Activated CD8-positive, alpha-beta T cell treated with anti-CD3 and anti-CD28 coated beads for 36 hours (primary cell): ENCODE measurements at regions of chr12 and their contacts with region 1.

Region 1: GRCh38 chr12:94262228-94263010 is 114.0 kb downstream of the PLXNC1 start:
- DNase-seq: peak; percentile 90
- ATAC-seq: peak; percentile 81
- H3K4me3 Mint-ChIP-seq: peak overlapping the region; percentile 88
- H3K27ac Mint-ChIP-seq: peak overlapping the region; percentile 99
- H3K4me1 Mint-ChIP-seq: peaks cover 40% of the 10 kb centered on the region
- H3K27me3 Mint-ChIP-seq: no peaks in the 10 kb centered on the region
- CTCF ChIP-seq: no peak

Region 2: DNA sequence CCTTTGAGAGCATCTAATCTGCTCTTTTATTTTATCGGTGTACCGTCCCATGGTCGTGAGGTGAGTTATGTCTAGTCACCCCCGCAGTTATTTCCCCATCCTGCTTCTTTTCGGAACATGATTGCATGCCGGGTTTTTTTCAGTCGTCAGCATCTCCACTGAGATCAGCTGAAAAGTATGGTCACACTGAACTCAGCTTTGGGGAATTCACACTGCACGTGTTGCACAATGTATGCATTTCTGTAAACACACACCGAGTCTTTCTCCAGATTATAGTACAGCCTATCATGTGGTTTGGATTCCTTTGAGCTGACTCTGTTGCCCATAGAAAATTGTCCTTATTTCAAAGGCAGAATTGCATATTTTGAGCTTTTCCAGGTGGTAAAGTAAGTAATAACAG is 89.4 kb before region 1 on chr12:
- CTCF ChIA-PET with region 1: no interaction called
- POLR2A ChIA-PET with region 1: no interaction called
- intact Hi-C with region 1: loop called (anchors 10 kb)
- DNase-seq: no peak
- ATAC-seq: no peak
- H3K4me3 Mint-ChIP-seq: no peak overlapping the region
- H3K27ac Mint-ChIP-seq: no peak overlapping the region
- H3K4me1 Mint-ChIP-seq: peaks cover 72% of the 10 kb centered on the region
- H3K27me3 Mint-ChIP-seq: no peaks in the 10 kb centered on the region
- CTCF ChIP-seq: no peak

Region 3: GRCh38 chr12:94405413-94406116 is 143.1 kb after region 1 on chr12:
- CTCF ChIA-PET with region 1: no interaction called
- POLR2A ChIA-PET with region 1: no interaction called
- intact Hi-C with region 1: no loop called
- DNase-seq: no peak
- ATAC-seq: no peak
- H3K4me3 Mint-ChIP-seq: no peak overlapping the region
- H3K27ac Mint-ChIP-seq: no peak overlapping the region
- H3K4me1 Mint-ChIP-seq: peaks cover 12% of the 10 kb centered on the region
- H3K27me3 Mint-ChIP-seq: no peaks in the 10 kb centered on the region
- CTCF ChIP-seq: no peak